GM12878 (cell line): ENCODE measurements at regions of chr12 and their contacts with region 1.

Region 1: DNA sequence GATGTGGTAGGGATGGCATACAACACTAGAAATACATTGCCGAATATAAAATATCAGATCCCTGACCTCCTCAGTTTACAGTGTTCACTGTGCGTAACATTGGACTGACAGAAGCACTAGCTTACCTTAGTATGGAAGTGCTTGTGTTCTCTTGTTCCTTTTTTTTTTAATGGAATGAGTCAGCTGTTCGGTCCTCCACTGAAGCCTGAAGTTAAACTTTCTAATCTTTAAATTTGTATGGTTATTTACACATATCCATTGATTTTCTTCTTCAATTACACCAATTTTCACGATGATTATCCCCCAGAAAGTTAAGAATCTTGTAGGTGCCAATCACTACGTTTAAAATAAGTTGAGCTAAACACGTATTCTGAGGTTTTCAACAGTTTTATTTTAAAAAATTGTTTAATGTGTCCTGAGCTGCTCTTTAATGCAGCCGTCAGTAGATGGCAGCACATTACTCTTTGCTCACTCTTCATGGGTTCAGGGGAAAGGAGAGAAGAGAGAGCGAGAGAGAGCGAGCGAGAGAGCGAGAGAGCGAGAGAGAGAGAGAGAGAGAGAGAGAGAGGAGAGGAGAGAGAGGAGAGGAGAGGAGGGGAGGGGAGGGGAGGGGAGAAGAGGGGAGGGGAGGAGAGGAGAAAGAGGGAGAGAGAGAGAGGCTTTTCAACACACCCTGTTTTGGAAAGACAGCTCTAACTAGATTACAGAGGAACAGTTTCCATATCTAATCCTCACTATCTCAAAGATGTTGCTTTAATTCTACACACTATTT is 134.7 kb upstream of the SCAF11 start:
- DNase-seq: no peak
- ATAC-seq: peak; percentile 96
- H3K4me3 ChIP-seq: no peak overlapping the region
- H3K27ac ChIP-seq: no peak overlapping the region
- H3K4me1 ChIP-seq: no peaks in the 10 kb centered on the region
- H3K27me3 ChIP-seq: no peaks in the 10 kb centered on the region; a peak in 1 of 4 replicates
- CTCF ChIP-seq: peak; percentile 58 to 74 (median 61); a peak in 5 of 6 replicates
- EP300 ChIP-seq: no peak
- POLR2A ChIP-seq: no peak
- RAD21 ChIP-seq: peak; percentile 84

Region 2: DNA sequence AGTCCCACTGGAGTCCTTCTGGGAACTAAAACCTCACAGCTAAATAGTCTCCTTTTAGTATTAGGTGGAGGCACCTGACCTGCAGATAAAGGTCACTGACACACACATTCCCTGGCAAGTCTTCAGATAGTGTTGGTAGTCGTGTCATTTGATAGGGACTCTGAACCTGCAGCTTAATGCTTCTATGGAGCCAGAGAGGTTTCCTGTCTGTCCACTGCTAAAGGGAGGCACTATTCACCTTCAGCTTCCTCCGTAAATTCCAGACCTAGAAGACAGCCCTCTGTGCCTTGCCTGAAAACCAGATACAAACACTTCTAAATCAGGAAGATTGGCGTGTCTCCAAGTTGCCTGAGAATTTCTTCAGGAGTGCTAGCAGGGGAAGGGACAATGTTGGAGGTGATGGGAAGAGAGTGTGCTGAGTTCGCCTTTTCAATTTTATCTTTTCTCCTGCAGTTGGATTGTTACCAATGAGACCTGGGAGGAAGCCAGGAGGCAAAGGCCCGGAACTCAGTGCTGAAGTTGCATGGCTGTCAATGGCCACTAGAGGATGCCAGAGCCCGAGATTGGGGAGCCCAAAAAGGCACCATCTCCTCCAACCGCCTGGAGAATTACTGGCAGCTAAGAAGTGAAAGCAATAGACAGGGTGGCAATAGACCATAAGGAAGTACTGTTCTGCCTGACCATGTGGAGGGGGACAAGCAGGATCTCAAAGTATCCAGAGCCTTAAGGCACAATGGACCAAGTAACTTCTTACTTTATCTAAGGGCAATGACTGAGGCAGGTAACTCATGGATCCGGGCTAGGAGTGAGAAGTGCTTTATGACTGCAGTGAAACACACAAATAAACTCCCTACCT is 53.0 kb before region 1 on chr12:
- CTCF ChIA-PET with region 1: interaction called, 57 read pairs
- POLR2A ChIA-PET with region 1: no interaction called
- RAD21 ChIA-PET with region 1: interaction called, 42 read pairs
- SMC1A ChIA-PET with region 1: interaction called, 45 read pairs
- in situ Hi-C with region 1: no loop called
- intact Hi-C with region 1: loop called (anchors 2 kb)
- DNase-seq: peak; percentile 57
- ATAC-seq: peak; percentile 99
- H3K4me3 ChIP-seq: no peak overlapping the region
- H3K27ac ChIP-seq: peak overlapping the region; percentile 39; the same call in 1 of the 2 replicates
- H3K4me1 ChIP-seq: peaks cover 11% of the 10 kb centered on the region
- H3K27me3 ChIP-seq: no peaks in the 10 kb centered on the region
- CTCF ChIP-seq: peak; percentile 97 to 100 (median 99)
- EP300 ChIP-seq: no peak
- POLR2A ChIP-seq: no peak
- RAD21 ChIP-seq: peak; percentile 97

Region 3: DNA sequence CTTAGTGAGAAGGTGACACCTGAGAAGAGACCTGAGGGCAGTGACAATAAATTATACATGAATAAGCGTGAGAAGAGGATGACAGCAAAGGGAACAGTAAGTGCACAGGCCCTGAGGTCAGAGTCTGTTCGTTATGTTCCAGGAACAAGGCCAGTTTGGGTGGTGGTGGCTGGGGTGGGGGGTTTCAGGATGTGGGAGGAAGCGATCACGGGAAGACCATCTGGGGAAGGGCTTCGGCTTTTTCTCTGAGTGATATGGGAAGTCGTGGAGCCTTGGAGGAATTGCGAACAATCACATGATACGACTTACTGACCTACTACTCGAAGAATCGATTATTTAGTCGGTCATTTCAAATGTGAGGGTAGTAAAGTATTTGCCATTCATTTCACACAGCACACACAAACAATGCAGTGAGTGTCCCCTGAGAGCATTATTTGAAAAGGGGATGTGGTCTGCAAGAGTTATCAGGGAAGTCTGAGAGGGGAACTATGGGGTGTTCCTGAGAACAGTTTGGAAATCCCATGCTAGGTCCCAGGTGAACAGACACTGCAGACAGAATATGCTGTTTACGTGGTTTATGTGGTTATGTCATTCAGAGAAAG is 49.1 kb after region 1 on chr12:
- CTCF ChIA-PET with region 1: interaction called, 6 read pairs
- POLR2A ChIA-PET with region 1: no interaction called
- RAD21 ChIA-PET with region 1: interaction called, 22 read pairs
- SMC1A ChIA-PET with region 1: interaction called, 6 read pairs
- in situ Hi-C with region 1: no loop called
- intact Hi-C with region 1: no loop called
- DNase-seq: peak; percentile 85
- ATAC-seq: peak; percentile 57
- H3K4me3 ChIP-seq: no peak overlapping the region; the same call in 1 of the 2 replicates
- H3K27ac ChIP-seq: peak overlapping the region; percentile 21
- H3K4me1 ChIP-seq: peaks cover 25% of the 10 kb centered on the region
- H3K27me3 ChIP-seq: no peaks in the 10 kb centered on the region
- CTCF ChIP-seq: no peak
- EP300 ChIP-seq: peak in 1 of 2 experiments; percentile 76; a peak in 2 of 4 replicates
- POLR2A ChIP-seq: no peak
- RAD21 ChIP-seq: no peak

Region 4: GRCh38 chr12:46263140-46264016 is 138.3 kb after region 1 on chr12:
- CTCF ChIA-PET with region 1: interaction called, 30 read pairs
- POLR2A ChIA-PET with region 1: no interaction called
- RAD21 ChIA-PET with region 1: interaction called, 13 read pairs
- SMC1A ChIA-PET with region 1: interaction called, 17 read pairs
- in situ Hi-C with region 1: no loop called
- intact Hi-C with region 1: no loop called
- DNase-seq: no peak
- ATAC-seq: no peak
- H3K4me3 ChIP-seq: peak overlapping the region; percentile 11
- H3K27ac ChIP-seq: peak overlapping the region; percentile 35
- H3K4me1 ChIP-seq: peaks cover 12% of the 10 kb centered on the region; the same call in 1 of the 2 replicates
- H3K27me3 ChIP-seq: no peaks in the 10 kb centered on the region
- CTCF ChIP-seq: no peak
- EP300 ChIP-seq: no peak
- POLR2A ChIP-seq: no peak
- RAD21 ChIP-seq: no peak

Region 5: GRCh38 chr12:46364777-46365580 is 239.9 kb after region 1 on chr12:
- CTCF ChIA-PET with region 1: interaction called, 5 read pairs
- POLR2A ChIA-PET with region 1: no interaction called
- RAD21 ChIA-PET with region 1: interaction called, 15 read pairs
- SMC1A ChIA-PET with region 1: interaction called, 9 read pairs
- in situ Hi-C with region 1: no loop called
- intact Hi-C with region 1: loop called (anchors 5 kb)
- DNase-seq: no peak
- ATAC-seq: peak; percentile 37
- H3K4me3 ChIP-seq: peak overlapping the region; percentile 34; the same call in 1 of the 2 replicates
- H3K27ac ChIP-seq: peak overlapping the region; percentile 22
- H3K4me1 ChIP-seq: peaks cover 37% of the 10 kb centered on the region
- H3K27me3 ChIP-seq: no peaks in the 10 kb centered on the region
- CTCF ChIP-seq: no peak
- EP300 ChIP-seq: 0 out of 4 replicates have a peak, but pooled peaks of 1 of the 2 experiments have one; percentile 42
- POLR2A ChIP-seq: no peak
- RAD21 ChIP-seq: no peak

Region 6: DNA sequence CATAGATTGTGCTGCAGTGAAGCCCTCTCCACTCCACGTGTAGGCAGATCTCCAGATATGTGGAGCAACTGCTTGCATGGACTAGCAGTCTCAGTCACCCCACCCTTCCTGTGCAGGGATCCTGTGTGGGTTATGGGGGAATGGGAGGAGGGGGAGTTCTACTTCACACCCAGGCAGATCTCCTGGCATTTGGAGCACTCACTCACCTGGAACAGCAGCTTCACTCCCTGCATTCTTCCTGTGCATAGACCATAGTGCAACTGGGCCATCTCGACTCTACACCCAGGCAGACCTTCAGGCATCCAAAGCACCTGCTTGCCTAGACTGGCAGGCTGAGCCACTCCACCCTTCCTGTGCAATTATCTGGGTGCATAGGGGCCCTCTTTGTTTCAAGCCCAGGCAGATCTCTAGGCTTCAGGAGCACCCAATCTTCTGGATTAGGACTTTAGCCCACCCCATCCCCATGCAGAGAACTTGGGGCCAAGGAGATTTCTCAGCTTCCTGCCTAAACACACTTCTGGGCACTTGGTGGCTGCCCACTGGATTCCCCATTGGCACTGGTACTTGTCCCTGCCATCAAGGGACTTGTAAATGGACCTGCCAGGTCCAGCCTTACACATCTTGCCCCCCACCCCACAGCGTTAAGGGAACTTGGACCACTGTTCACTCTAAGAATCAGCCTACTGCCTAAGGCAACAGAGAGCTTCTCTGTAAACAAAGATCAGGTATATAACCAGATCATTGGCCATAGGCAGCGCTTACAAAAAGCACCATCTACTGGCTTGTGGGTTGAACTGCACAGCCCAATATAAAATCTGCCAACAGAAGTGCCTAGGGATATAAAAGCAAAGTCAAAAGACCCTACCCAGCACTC is 858.6 kb after region 1 on chr12:
- CTCF ChIA-PET with region 1: interaction called, 30 read pairs
- POLR2A ChIA-PET with region 1: no interaction called
- RAD21 ChIA-PET with region 1: interaction called, 27 read pairs
- SMC1A ChIA-PET with region 1: interaction called, 22 read pairs
- in situ Hi-C with region 1: no loop called
- intact Hi-C with region 1: loop called (anchors 2 kb)
- DNase-seq: peak; percentile 2
- ATAC-seq: peak; percentile 92
- H3K4me3 ChIP-seq: no peak overlapping the region
- H3K27ac ChIP-seq: no peak overlapping the region
- H3K4me1 ChIP-seq: no peaks in the 10 kb centered on the region
- H3K27me3 ChIP-seq: no peaks in the 10 kb centered on the region
- CTCF ChIP-seq: peak; percentile 76 to 80 (median 77)
- EP300 ChIP-seq: no peak
- POLR2A ChIP-seq: no peak
- RAD21 ChIP-seq: peak; percentile 89